Activated B cell treated with CpG ODN at 0.5 μM for 24 hours (primary cell): ENCODE measurements at regions of chr1 and their contacts with region 1.

Region 1: DNA sequence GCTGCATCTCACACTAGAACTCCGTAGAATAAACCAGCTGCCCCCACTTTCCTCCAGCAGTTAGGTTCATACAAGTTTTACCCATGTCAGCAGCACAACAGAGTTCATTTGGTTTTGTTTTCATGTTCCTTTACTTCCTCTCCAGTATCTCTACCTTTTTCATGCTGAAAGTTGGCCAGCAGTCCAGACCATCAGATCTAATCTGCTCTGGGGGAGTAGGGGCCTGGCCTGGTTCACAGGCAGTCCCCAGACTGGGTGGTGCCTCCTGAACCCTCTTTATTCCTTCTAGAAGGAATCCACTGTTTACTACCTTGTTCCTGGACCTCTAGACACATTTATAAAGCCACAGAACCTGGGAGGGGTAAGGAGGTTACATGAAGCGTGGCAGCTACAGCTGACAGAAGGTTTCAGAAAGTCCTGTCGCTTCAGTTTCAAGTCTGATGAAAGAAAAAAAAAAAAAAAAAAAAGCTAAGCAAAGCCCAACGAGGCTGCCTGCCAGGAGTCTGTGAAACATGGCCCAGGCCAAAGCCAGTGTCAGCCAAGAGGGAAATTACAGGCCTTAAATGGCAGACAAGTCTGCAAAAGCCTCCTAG is 184.6 kb upstream of the JUN start:
- DNase-seq: peak; percentile 46
- ATAC-seq: peak; percentile 95
- H3K4me3 Mint-ChIP-seq: peak overlapping the region; percentile 77
- H3K27ac Mint-ChIP-seq: peak overlapping the region; percentile 99
- H3K4me1 Mint-ChIP-seq: peaks cover 72% of the 10 kb centered on the region
- H3K27me3 Mint-ChIP-seq: no peaks in the 10 kb centered on the region
- CTCF ChIP-seq: no peak

Region 2: DNA sequence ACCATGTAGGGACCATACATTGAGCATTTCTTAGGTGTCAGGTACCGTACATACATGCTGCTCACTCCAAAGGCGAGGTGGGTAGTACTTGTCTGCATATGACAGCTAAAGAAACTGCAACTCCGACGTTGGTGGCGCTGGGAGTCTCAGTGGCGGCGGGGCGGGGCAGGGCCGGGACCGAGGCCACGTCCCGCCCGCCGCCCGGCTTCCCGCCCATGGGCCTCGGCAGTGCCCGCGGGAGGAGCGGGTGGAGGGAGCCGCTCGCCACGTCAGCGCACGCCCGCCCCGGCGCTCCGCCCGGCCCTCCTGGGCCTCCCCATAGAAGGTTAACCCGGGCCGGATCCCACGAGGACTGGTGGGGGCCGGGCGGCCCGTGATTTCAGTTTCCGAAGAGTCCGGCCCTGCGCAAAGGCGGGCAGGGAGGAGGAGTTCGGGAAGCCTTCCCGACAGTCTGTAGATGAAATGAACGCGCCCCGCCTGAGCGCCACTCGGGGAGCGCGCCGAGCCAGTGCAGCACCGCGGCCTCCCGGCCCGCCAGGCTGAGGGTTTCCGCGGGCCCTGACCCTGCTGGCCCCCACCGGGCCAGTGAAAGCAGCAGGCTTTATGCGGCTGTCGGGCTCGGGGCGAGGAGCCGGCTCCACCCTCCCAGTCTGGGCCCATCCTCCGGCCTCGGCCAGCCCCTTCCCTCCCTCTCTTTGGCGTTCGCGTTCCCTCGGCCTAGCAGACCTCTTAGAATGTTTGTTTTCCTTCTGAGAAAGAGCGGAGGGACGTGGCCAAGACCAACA is 64.8 kb before region 1 on chr1:
- CTCF ChIA-PET with region 1: no interaction called
- POLR2A ChIA-PET with region 1: interaction called, 22 read pairs
- intact Hi-C with region 1: loop called (anchors 1 kb)
- DNase-seq: peak; percentile 75
- ATAC-seq: peak; percentile 90
- H3K4me3 Mint-ChIP-seq: peak overlapping the region; percentile 84
- H3K27ac Mint-ChIP-seq: peak overlapping the region; percentile 81
- H3K4me1 Mint-ChIP-seq: peaks cover 16% of the 10 kb centered on the region
- H3K27me3 Mint-ChIP-seq: no peaks in the 10 kb centered on the region
- CTCF ChIP-seq: no peak

Region 3: GRCh38 chr1:58941471-58942289 is 26.8 kb before region 1 on chr1:
- CTCF ChIA-PET with region 1: no interaction called
- POLR2A ChIA-PET with region 1: interaction called, 24 read pairs
- intact Hi-C with region 1: no loop called
- DNase-seq: no peak
- ATAC-seq: peak; percentile 42
- H3K4me3 Mint-ChIP-seq: peak overlapping the region; percentile 20
- H3K27ac Mint-ChIP-seq: peak overlapping the region; percentile 76
- H3K4me1 Mint-ChIP-seq: peaks cover 44% of the 10 kb centered on the region
- H3K27me3 Mint-ChIP-seq: no peaks in the 10 kb centered on the region
- CTCF ChIP-seq: no peak

Region 4: GRCh38 chr1:59013276-59013927 is 44.9 kb after region 1 on chr1:
- CTCF ChIA-PET with region 1: no interaction called
- POLR2A ChIA-PET with region 1: interaction called, 20 read pairs
- intact Hi-C with region 1: loop called (anchors 1 kb)
- DNase-seq: peak; percentile 45
- ATAC-seq: peak; percentile 72
- H3K4me3 Mint-ChIP-seq: peak overlapping the region; percentile 73
- H3K27ac Mint-ChIP-seq: peak overlapping the region; percentile 91
- H3K4me1 Mint-ChIP-seq: peaks cover 76% of the 10 kb centered on the region
- H3K27me3 Mint-ChIP-seq: no peaks in the 10 kb centered on the region
- CTCF ChIP-seq: no peak

Region 5: DNA sequence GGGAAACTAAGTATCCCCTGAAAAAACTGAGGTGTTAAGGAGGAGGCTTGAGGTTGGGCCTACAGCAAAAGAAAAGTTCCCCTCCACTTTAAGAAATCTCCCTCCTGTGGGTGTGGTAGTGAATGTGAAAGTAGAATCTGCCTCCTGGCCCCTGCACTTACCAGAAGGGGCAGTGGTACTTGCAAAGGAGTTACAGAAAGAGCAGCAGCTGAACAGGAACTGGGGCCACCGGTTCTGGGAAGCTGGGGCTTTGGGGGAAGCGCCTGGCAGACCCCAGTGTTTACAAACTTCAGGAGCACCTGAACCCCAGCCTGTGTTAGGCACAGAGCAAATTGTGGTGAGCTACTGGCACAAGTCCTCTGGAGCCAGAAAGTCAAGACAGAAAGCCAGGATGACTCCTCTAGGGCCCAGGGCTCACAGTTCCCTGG is 78.3 kb after region 1 on chr1:
- CTCF ChIA-PET with region 1: interaction called, 5 read pairs
- POLR2A ChIA-PET with region 1: interaction called, 10 read pairs
- intact Hi-C with region 1: no loop called
- DNase-seq: peak; percentile 22
- ATAC-seq: peak; percentile 96
- H3K4me3 Mint-ChIP-seq: no peak overlapping the region
- H3K27ac Mint-ChIP-seq: peak overlapping the region; percentile 91
- H3K4me1 Mint-ChIP-seq: peaks cover 31% of the 10 kb centered on the region
- H3K27me3 Mint-ChIP-seq: no peaks in the 10 kb centered on the region
- CTCF ChIP-seq: no peak

Region 6: DNA sequence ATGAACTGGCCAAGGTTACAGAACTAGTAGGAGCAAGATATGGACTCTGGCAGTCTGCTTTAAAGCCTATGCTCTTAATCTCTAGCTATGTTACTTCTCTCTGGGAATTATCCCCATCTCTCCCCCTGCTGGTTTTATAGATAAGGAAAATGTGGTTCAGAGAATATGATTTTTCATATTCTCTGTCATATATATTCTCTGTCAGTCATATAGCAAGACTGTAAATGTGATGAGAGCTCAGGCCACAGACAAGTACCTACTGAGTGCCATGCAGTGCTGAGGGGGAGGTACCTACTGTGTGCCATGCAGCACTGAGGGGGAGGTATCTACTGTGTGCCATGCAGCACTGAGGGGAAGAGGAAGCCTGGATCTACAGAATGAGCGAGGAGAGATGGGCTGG is 108.2 kb after region 1 on chr1:
- CTCF ChIA-PET with region 1: no interaction called
- POLR2A ChIA-PET with region 1: no interaction called
- intact Hi-C with region 1: no loop called
- DNase-seq: no peak
- ATAC-seq: no peak
- H3K4me3 Mint-ChIP-seq: no peak overlapping the region
- H3K27ac Mint-ChIP-seq: no peak overlapping the region
- H3K4me1 Mint-ChIP-seq: peaks cover 31% of the 10 kb centered on the region
- H3K27me3 Mint-ChIP-seq: no peaks in the 10 kb centered on the region
- CTCF ChIP-seq: no peak

Region 7: DNA sequence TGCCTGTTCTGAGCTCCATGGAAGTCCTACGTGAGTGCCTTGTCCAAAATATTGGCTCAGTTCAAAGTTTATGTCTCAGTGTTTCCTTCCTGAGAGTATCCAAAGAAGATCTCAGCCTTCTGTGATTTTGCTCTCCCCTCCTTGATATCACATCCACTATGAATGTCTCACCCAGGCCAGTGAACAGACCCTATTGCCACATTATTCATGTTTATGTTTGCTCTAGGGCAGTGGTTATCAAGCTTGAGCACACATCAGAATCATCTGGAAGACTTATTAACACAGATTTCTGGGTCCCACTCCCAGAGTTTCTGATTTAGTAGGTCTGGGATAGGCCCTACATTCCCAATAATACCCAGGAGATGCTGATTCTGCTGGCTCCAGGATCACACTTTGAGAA is 183.4 kb after region 1 on chr1:
- CTCF ChIA-PET with region 1: no interaction called
- POLR2A ChIA-PET with region 1: no interaction called
- intact Hi-C with region 1: no loop called
- DNase-seq: no peak
- ATAC-seq: no peak
- H3K4me3 Mint-ChIP-seq: no peak overlapping the region
- H3K27ac Mint-ChIP-seq: peak overlapping the region; percentile 8
- H3K4me1 Mint-ChIP-seq: peaks cover 26% of the 10 kb centered on the region
- H3K27me3 Mint-ChIP-seq: no peaks in the 10 kb centered on the region
- CTCF ChIP-seq: no peak